Activated CD4-positive, alpha-beta memory T cell treated with anti-CD3 and anti-CD28 coated beads, Interleukin-2, amount 10 ng/mL, durations not matched to agents 7 days and 5 days (primary cell): ENCODE measurements at regions of chr19 and their contacts with region 1.

Region 1: DNA sequence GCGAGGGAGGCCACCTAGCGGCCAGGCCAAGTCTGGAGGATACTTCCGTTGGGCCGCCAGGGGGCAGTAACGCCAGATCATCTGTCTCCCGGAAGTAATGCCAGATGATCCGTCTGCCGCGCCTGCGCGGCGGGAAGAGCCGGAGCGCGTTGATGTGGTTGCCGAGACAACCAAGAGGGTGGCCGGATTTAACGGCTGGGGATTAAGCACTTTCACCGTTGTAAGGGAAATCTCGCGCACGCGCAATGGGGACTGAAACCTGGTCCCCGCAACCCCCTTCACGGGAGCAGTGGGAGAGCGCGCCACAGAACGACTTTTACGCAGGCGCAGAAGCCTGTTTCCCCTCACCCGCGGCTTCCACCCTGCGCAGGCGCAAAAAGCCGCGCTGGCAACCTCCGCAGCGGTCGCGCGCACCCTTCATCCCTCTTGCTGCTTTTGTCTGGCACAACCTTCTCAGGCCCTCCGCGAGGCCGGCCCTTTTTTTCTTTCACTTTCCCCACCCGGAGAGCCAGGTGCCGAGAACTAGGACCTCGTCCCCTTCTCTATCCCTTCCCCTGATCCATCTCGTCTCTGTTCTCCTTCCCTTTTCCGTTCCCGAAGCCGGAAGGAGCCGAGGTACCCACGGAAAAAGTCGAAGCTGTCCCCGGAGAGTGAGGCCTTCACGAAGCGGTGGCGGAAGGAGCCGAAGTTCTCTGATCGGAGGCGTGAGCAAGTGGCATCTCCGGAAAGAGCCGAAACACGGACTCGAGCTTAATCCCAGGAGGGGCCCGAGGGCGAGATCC is 886 bp upstream of the U2AF2 start:
- DNase-seq: peak; percentile 100
- H3K4me3 Mint-ChIP-seq: peak overlapping the region; percentile 83
- H3K27ac Mint-ChIP-seq: peak overlapping the region; percentile 94
- H3K4me1 Mint-ChIP-seq: peaks cover 39% of the 10 kb centered on the region
- H3K27me3 Mint-ChIP-seq: no peaks in the 10 kb centered on the region

Region 2: GRCh38 chr19:55624109-55625003 is 29.6 kb before region 1 on chr19 and contains the start of gene ZNF784:
- CTCF ChIA-PET with region 1: interaction called, 12 read pairs
- POLR2A ChIA-PET with region 1: interaction called, 16 read pairs
- DNase-seq: peak; percentile 94
- H3K4me3 Mint-ChIP-seq: peak within 1 kb of the TSS; percentile 78
- H3K27ac Mint-ChIP-seq: peak within 1 kb of the TSS; percentile 93
- H3K4me1 Mint-ChIP-seq: peaks cover 50% of the 10 kb centered on the region
- H3K27me3 Mint-ChIP-seq: peaks cover 7% of the 10 kb centered on the region
- total RNA-seq, gene ZNF784: 6.4 to 7.4 TPM

Region 3: DNA sequence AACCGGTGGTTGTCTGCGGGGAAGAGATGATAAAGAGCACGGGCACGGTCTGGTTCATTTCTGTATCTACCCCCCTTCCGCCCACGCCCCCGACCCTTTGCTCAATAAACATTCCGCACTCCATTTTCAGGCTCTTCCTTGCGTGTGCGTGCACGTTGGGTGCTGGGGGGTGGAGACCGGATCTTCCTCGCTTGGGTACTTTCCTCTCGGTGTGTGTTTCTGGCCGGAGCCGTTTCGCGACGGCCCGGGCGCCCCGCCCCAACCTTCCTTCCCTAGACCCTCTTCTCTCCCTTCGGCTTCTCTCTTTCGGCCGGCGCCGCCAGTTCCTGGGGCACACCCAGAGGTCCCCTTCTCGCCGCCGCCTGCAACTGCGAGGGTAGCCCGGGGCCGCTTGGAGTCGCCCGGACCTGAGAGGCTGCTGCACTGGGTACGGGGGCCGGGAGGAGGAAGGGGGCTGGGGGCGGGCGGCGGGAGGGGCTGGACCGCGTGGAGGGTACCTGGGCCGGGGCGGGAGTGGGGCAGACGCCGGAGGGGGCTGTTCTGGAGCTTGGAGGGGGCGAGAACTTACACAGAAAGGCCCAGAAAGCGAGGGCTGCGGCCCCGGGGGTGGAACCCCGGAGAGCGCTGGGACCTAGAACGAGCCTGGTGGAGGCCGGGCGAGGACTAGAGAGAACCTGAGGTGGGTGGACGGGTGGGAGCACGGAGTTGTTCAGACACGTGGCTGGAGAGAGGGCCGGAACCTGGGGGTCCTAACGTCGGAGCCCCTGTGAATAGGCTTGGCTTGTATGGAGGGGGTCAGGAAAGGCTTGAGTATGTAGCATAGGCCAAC is 10.4 kb before region 1 on chr19 and contains the start of gene ZNF581:
- CTCF ChIA-PET with region 1: interaction called, 11 read pairs
- POLR2A ChIA-PET with region 1: interaction called, 23 read pairs
- DNase-seq: peak; percentile 78
- H3K4me3 Mint-ChIP-seq: peak within 1 kb of the TSS; percentile 86
- H3K27ac Mint-ChIP-seq: peak within 1 kb of the TSS; percentile 94
- H3K4me1 Mint-ChIP-seq: peaks cover 54% of the 10 kb centered on the region
- H3K27me3 Mint-ChIP-seq: no peaks in the 10 kb centered on the region
- total RNA-seq, gene ZNF581: 26.6 to 30.1 TPM

Region 4: GRCh38 chr19:55670280-55671053 is 16.5 kb after region 1 on chr19:
- CTCF ChIA-PET with region 1: interaction called, 12 read pairs
- POLR2A ChIA-PET with region 1: interaction called, 16 read pairs
- DNase-seq: no peak
- H3K4me3 Mint-ChIP-seq: no peak overlapping the region
- H3K27ac Mint-ChIP-seq: no peak overlapping the region
- H3K4me1 Mint-ChIP-seq: peaks cover 30% of the 10 kb centered on the region
- H3K27me3 Mint-ChIP-seq: no peaks in the 10 kb centered on the region